Activated T-helper 1 cell treated with anti-CD3 and anti-CD28 coated beads, Interleukin-12 subunit alpha, Interleukin-12 subunit beta, Interleukin-2, Interleukin-4 antibody, amounts not matched to agents 30 ng/mL and 10 ng/mL and 1 ng/mL, durations not matched to agents 14 hours and 24 hours and 36 hours (primary cell): ENCODE measurements at regions of chr17 and their contacts with region 1.

Region 1: DNA sequence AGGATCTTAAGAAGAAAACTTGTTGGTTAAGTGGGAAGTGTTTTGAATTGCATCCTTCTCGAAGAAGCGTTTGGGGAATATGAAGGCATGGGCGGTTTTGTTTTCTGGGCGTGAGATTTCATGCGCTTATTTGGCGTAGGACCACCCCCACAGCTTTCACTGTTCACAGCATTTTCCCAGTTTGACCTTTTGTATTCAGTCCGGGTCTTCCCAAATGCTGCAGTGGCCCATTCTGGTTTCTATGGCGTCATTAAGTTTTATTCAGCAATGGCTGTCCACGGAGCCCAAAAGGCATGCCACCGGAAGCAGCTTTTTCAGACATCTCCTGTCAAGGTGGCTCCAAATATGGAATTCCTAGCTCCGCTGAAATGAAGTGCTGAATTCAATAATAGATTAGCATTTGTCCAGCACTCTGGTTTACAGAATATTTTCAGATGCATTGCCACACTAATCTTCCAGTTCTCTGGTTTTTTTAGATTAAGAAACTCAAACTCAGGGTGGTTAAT is 90.6 kb upstream of the FBXO47 start:
- DNase-seq: no peak
- H3K4me3 Mint-ChIP-seq: peak overlapping the region; percentile 76
- H3K27ac Mint-ChIP-seq: no peak overlapping the region
- H3K4me1 Mint-ChIP-seq: peaks cover 17% of the 10 kb centered on the region
- H3K27me3 Mint-ChIP-seq: peaks cover 12% of the 10 kb centered on the region

Region 2: DNA sequence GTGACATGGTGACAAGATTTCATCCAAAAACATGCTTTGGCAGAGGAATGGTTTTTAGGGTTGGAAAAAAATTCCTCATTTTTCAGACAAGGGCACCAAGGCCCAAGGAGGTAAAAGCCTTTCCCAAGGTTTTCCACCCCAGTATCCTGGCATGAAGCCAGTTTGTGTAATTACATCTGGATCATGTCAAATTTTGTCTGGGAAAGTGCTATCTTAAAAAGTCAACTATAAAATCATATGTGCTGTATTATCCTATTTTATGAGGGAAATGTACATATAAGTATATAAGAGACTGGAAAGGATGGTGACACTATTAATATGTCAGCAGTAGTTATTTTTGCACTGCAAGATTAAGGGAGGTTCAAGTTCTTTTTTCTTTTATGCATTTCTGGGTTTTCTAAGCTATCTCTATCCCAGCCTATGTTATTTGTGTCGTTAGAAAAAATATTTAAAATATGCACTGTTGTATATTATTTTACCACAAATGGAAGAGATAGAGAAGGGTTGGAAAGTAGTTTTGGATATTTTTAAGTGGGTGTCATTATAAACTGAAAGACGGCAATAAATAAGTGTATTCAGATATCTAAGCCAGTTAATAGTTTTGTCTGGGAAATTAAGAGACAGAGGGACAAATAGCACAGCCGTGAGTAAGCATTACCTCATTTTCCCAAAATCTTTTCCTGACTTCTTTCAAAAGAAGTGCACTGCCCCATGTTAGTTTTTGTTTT is 77.1 kb before region 1 on chr17:
- intact Hi-C with region 1: no loop called
- DNase-seq: no peak
- H3K4me3 Mint-ChIP-seq: no peak overlapping the region
- H3K27ac Mint-ChIP-seq: no peak overlapping the region
- H3K4me1 Mint-ChIP-seq: peaks cover 8% of the 10 kb centered on the region
- H3K27me3 Mint-ChIP-seq: peaks cover 4% of the 10 kb centered on the region

Region 3: DNA sequence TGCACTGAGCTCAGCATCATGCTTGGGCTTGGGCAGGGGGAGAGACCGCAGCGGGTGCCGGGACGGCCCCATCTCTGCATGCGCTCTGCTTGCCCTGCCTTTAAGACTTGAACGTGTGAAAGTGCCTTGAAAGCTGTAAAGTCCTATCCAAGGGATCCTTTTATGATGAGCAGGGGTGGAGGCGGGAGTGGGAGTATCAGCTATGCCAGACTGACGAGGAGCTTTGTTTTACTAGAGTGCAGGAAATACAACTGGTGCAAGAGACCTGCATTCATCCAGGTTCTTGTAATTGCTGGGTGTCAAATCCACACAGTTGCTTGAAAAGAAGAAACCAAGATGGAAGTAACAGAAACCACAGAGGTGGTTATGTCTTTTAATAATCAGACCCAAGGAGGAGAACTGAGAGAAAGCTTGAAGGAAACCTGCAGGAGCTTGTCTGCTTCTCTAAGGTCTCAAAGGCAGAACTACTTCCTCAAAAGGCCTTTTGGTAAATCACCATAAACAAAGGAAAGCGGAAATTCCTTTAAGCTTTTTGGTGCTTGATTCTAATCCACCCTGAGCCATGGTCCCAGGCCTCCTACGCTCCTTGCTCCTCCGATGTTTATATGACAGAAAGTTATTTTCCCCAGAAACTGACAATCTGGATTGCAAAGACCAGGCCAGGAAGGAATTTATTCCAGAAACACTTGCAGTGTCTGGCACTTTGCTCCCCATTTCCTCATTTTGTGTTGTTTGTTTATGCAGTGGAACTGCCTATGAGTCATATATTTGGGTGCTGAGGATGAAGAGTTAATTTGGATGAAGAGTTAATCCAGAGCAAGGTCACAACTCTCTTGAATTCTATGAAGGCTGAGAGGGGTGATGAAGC is 39.3 kb before region 1 on chr17:
- intact Hi-C with region 1: loop called (anchors 2 kb)
- DNase-seq: no peak
- H3K4me3 Mint-ChIP-seq: peak overlapping the region; percentile 9
- H3K27ac Mint-ChIP-seq: peak overlapping the region; percentile 3
- H3K4me1 Mint-ChIP-seq: peaks cover 27% of the 10 kb centered on the region
- H3K27me3 Mint-ChIP-seq: no peaks in the 10 kb centered on the region

Region 4: GRCh38 chr17:39036014-39036413 is 21.7 kb before region 1 on chr17:
- intact Hi-C with region 1: no loop called
- DNase-seq: no peak
- H3K4me3 Mint-ChIP-seq: no peak overlapping the region
- H3K27ac Mint-ChIP-seq: no peak overlapping the region
- H3K4me1 Mint-ChIP-seq: no peaks in the 10 kb centered on the region
- H3K27me3 Mint-ChIP-seq: peaks cover 25% of the 10 kb centered on the region

Region 5: GRCh38 chr17:39077866-39078265 is 20.1 kb after region 1 on chr17:
- intact Hi-C with region 1: no loop called
- DNase-seq: no peak
- H3K4me3 Mint-ChIP-seq: no peak overlapping the region
- H3K27ac Mint-ChIP-seq: no peak overlapping the region
- H3K4me1 Mint-ChIP-seq: peaks cover 16% of the 10 kb centered on the region
- H3K27me3 Mint-ChIP-seq: peaks cover 6% of the 10 kb centered on the region